CD14-positive monocyte (primary cell): ENCODE measurements at regions of chr17 and their contacts with region 1.

Region 1: GRCh38 chr17:7095625-7096024 is 15.6 kb upstream of the CLEC10A start:
- DNase-seq: peak; percentile 72 to 93 (median 84)
- H3K4me3 ChIP-seq: peak overlapping the region in 1 of 3 experiments; percentile 54
- H3K4me3 Mint-ChIP-seq: peak overlapping the region in 1 of 2 donors; percentile 70
- H3K27ac ChIP-seq: peak overlapping the region; percentile 90 to 95
- H3K27ac Mint-ChIP-seq: peak overlapping the region; percentile 92 to 100 (median 99)
- H3K4me1 ChIP-seq: peaks cover 87 to 91% of the 10 kb centered on the region in 2 donors
- H3K4me1 Mint-ChIP-seq: peaks cover 84% of the 10 kb centered on the region
- H3K27me3 ChIP-seq: no peaks in the 10 kb centered on the region
- H3K27me3 Mint-ChIP-seq: peaks cover 0 to 3% (median 1%) of the 10 kb centered on the region in 3 donors
- CTCF ChIP-seq: no peak

Region 2: DNA sequence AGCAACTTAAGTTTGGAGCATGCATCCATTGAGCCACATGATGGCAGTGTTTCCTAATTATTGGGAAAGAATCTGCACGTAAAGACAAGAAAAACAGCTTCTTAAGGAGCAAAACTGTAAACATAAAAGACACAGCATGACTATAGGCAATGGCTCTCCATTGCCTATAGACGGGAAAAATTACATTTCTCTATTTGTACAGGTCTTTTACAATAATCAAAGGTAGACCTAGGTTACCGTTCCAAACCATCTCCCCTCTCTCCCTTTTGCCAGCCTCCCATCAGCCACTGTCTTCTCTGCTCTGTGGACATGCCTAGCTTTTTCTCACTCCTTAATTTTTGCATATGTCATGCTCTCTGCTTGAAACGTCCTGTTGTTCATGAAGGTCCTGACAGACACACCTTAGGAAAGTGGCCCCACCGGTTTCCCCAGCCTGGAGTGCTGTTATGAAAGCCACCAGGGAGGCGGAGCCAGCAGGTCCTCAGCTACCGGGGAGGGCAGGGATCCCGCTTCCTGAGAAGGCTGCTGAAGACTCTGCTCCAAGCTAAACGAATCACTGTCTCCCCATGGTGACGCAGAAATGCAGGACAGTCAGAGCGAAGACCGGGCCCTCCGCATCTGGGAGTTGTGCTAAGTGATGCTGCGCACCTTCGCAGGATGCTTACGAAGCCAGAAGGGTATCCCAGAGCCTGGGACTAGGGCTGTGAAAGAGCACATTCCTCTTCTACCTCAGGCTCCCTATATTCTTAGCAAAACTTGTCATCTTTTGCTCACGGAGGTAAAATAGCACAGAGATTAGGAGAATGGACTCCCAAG is 49.5 kb before region 1 on chr17:
- intact Hi-C with region 1: loop called in 1 of 2 experiments (anchors 5 kb)
- DNase-seq: peak; percentile 67 to 71 (median 70)
- H3K4me3 ChIP-seq: peak overlapping the region; percentile 21 to 65 (median 33)
- H3K4me3 Mint-ChIP-seq: peak overlapping the region; percentile 71 to 92
- H3K27ac ChIP-seq: no peak overlapping the region
- H3K27ac Mint-ChIP-seq: peak overlapping the region in 6 of 7 donors; percentile 26 to 89 (median 66)
- H3K4me1 ChIP-seq: peaks cover 43 to 46% of the 10 kb centered on the region in 2 donors
- H3K4me1 Mint-ChIP-seq: peaks cover 34% of the 10 kb centered on the region
- H3K27me3 ChIP-seq: peaks cover 32 to 45% of the 10 kb centered on the region in 2 donors
- H3K27me3 Mint-ChIP-seq: peaks cover 41 to 51% (median 49%) of the 10 kb centered on the region in 3 donors
- CTCF ChIP-seq: peak; percentile 89

Region 3: GRCh38 chr17:7060165-7060891 is 35.3 kb before region 1 on chr17:
- intact Hi-C with region 1: loop called in 1 of 2 experiments (anchors 5 kb)
- DNase-seq: peak in 1 of 3 donors; percentile 47
- H3K4me3 ChIP-seq: no peak overlapping the region
- H3K4me3 Mint-ChIP-seq: no peak overlapping the region
- H3K27ac ChIP-seq: no peak overlapping the region
- H3K27ac Mint-ChIP-seq: peak overlapping the region in 2 of 7 donors; percentile 10 to 14
- H3K4me1 ChIP-seq: peaks cover 19 to 28% of the 10 kb centered on the region in 2 donors
- H3K4me1 Mint-ChIP-seq: peaks cover 32% of the 10 kb centered on the region
- H3K27me3 ChIP-seq: no peaks in the 10 kb centered on the region
- H3K27me3 Mint-ChIP-seq: peaks cover 4 to 10% (median 8%) of the 10 kb centered on the region in 3 donors
- CTCF ChIP-seq: no peak

Region 4: DNA sequence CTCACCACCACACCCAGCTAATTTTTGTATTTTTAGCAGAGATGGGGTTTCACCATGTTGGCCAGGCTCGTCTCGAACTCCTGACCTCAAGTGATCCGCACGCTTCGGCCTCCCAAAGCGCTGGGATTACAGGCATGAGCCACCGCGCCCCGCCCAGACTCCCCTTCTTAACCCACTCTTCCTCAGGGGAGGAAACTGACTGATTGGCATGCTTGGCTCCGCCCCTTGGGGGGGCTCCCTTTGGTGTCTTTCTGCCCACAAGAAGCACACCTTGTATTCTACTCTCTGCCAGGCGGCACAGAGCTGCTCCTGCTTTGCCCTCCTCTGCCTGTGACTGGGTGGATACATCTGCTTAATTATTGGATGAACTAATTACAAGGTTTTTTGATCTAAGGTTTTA is 23.7 kb after region 1 on chr17:
- intact Hi-C with region 1: loop called in 1 of 2 experiments (anchors 2 kb)
- DNase-seq: no peak
- H3K4me3 ChIP-seq: no peak overlapping the region
- H3K4me3 Mint-ChIP-seq: no peak overlapping the region
- H3K27ac ChIP-seq: peak overlapping the region; percentile 78 to 99
- H3K27ac Mint-ChIP-seq: peak overlapping the region; percentile 98 to 100 (median 99)
- H3K4me1 ChIP-seq: peaks cover 93 to 99% of the 10 kb centered on the region in 2 donors
- H3K4me1 Mint-ChIP-seq: peaks cover 65% of the 10 kb centered on the region
- H3K27me3 ChIP-seq: no peaks in the 10 kb centered on the region
- H3K27me3 Mint-ChIP-seq: no peaks in the 10 kb centered on the region
- CTCF ChIP-seq: no peak

Region 5: GRCh38 chr17:7136266-7136877 is 40.7 kb after region 1 on chr17:
- intact Hi-C with region 1: loop called (anchors 2 kb)
- DNase-seq: peak; percentile 76 to 83 (median 81)
- H3K4me3 ChIP-seq: peak overlapping the region in 2 of 3 experiments; percentile 73 to 82
- H3K4me3 Mint-ChIP-seq: peak overlapping the region; percentile 82 to 94
- H3K27ac ChIP-seq: peak overlapping the region; percentile 100
- H3K27ac Mint-ChIP-seq: peak overlapping the region; percentile 96 to 100 (median 97)
- H3K4me1 ChIP-seq: peaks cover 85 to 91% of the 10 kb centered on the region in 2 donors
- H3K4me1 Mint-ChIP-seq: peaks cover 83% of the 10 kb centered on the region
- H3K27me3 ChIP-seq: no peaks in the 10 kb centered on the region
- H3K27me3 Mint-ChIP-seq: peaks cover 0 to 6% (median 1%) of the 10 kb centered on the region in 3 donors
- CTCF ChIP-seq: peak; percentile 99